Right ventricle myocardium superior (tissue), 1 donor: ENCODE measurements at regions of chr17 and their contacts with region 1.

Region 1: GRCh38 chr17:29760761-29761696 is 138.3 kb upstream of the CORO6 start:
- DNase-seq: peak; percentile 97
- ATAC-seq: peak; percentile 97

Region 2: DNA sequence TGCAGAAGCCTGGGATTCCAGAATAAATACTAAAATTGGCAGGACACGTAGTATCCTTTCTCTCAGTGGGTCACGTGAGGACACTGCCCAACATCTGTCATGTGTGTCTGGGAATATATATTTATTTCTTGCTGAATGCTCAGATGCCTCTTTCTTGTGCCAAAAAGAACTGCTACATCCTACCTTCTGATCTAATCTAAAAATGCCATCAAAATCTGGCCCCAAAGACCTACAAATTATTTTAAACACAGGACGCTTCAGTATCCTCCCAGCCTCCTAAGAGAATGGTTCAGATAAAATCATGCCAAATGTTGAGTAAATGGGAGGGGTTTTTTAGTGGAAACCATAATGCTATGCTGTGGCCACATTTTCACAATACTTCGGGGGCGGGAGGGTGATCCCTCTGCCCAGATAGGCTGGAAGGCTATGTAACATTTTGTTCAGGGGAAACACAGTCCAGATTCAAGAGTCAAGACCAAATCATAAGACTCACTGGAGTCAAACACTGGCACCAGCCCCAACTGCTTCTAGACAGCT is 115.4 kb before region 1 on chr17:
- intact Hi-C with region 1: loop called (anchors 5 kb)
- DNase-seq: peak; percentile 81
- ATAC-seq: peak; percentile 79

Region 3: GRCh38 chr17:29687596-29687995 is 73.4 kb before region 1 on chr17:
- intact Hi-C with region 1: no loop called
- DNase-seq: no peak
- ATAC-seq: peak; percentile 80